Spleen (tissue), 13 donors: ENCODE measurements at regions of chr4 and their contacts with region 1.

Region 1: DNA sequence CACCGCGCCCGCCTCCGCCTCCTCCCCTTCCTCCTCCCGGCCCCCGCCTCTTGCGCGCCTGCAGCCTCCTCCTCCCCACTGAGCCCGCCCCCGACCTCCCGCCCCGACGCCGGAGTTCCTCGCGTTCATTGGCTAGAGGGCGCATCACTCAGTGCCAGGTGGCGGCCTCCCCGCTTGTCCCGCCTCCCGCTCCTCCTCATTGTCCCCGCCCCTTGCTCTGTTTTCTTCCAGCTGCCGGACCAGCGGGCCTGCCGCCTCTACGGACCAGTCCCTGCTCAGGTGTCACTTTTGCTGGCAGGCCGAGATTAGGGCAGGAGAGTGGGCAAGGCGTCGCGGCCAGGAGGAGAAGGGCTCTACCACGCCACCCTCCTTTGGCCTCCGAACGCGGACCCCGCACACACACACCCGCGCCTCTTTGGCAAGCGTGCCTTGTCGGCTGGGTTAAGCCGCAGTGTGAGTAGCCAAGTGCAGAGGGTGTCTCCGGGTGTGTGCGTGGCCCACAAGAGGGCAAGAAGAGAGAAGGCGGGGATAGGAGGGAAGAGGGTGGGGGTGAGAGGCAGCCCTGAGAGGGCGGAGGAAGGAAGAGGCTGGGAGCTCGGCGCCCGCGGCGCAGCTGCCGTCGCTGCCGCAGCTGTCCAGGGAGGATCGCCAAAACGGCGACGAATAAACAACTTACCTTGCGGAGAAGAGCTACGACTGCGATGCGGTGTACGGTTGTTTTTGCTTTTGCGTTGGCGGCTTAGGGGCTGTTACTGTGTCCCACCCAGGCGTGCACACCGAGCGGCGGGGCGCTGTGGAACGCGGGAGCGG is 436 bp upstream of the PPP3CA start:
- DNase-seq: peak; percentile 100
- H3K4me3 ChIP-seq: peak overlapping the region; percentile 66 to 95 (median 88)
- H3K27ac ChIP-seq: peak overlapping the region; percentile 88 to 99 (median 98)
- H3K4me1 ChIP-seq: peaks cover 9 to 52% (median 39%) of the 10 kb centered on the region in 6 donors
- H3K27me3 ChIP-seq: no peaks in the 10 kb centered on the region
- CTCF ChIP-seq: peak in 3 of 11 experiments; percentile 18 to 35 (median 20)
- POLR2A ChIP-seq: peak in 2 of 3 donors; percentile 61 to 76

Region 2: GRCh38 chr4:101191302-101192098 is 156.3 kb before region 1 on chr4:
- intact Hi-C with region 1: loop called (anchors 10 kb)
- DNase-seq: peak; percentile 80
- H3K4me3 ChIP-seq: no peak overlapping the region
- H3K27ac ChIP-seq: peak overlapping the region in 7 of 8 donors; percentile 42 to 74 (median 58)
- H3K4me1 ChIP-seq: peaks cover 2 to 47% (median 18%) of the 10 kb centered on the region in 6 donors
- H3K27me3 ChIP-seq: no peaks in the 10 kb centered on the region
- CTCF ChIP-seq: no peak
- POLR2A ChIP-seq: no peak